Esophagus muscularis mucosa (tissue), 4 donors: ENCODE measurements at regions of chr19 and their contacts with region 1.

Region 1: GRCh38 chr19:2820112-2820702 is 539 bp downstream of the ZNF554 start:
- DNase-seq: no peak
- H3K4me3 ChIP-seq: peak overlapping the region; percentile 85 to 97 (median 92)
- H3K27ac ChIP-seq: peak overlapping the region; percentile 71 to 78 (median 72)
- H3K4me1 ChIP-seq: peaks cover 3 to 20% (median 18%) of the 10 kb centered on the region in 4 donors
- H3K27me3 ChIP-seq: no peaks in the 10 kb centered on the region
- CTCF ChIP-seq: no peak
- EP300 ChIP-seq: no peak
- POLR2A ChIP-seq: no peak

Region 2: DNA sequence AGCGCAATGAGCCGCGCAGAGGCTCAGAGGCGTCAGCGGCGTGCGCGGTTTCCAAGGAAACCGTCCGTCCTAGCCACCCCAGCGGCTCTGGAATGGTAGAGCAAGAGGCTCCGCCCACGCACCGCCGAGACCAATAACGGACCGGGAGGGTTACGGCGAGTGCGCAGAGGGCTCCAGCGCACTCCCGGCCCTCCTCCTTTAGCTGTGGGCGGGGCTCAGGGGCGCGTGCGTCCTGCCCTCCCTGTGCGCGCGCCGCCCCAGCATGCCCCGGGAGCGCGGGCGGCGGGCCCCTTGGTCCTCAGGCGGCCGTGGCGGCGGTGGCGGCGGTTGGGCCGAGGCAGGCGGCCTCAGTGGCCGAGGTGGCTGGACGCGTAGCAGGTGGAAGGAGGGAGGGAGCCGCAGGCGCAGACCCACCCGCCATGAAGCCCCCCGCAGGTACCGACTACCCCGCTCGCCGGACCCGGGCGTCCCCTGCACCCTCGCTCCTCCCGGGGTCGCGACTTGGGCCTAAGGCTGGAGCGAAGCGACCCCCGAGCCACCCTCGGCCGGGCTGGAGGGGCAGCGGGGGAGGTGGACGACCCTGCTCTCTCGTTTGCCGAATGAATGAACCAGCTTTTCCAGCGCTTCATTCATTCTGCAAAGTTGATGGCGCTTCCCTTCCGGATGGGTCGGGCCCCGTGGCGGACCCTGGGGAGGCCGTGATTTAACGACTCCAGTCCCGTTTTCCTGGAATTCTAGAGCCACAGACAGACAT is 34.8 kb before region 1 on chr19 and contains the start of gene THOP1:
- intact Hi-C with region 1: loop called (anchors 1 kb)
- DNase-seq: peak; percentile 98
- H3K4me3 ChIP-seq: peak within 1 kb of the TSS; percentile 73 to 96 (median 82)
- H3K27ac ChIP-seq: peak within 1 kb of the TSS; percentile 78 to 97 (median 84)
- H3K4me1 ChIP-seq: peaks cover 49 to 62% (median 50%) of the 10 kb centered on the region in 4 donors
- H3K27me3 ChIP-seq: no peaks in the 10 kb centered on the region
- CTCF ChIP-seq: peak in 1 of 3 experiments; percentile 38
- EP300 ChIP-seq: no peak
- POLR2A ChIP-seq: peak; percentile 37
- total RNA-seq, gene THOP1: 22.8 to 65.3 (median 42.4) TPM

Region 3: GRCh38 chr19:2900296-2901252 is 80.4 kb after region 1 on chr19 and contains the start of gene ZNF57:
- intact Hi-C with region 1: no loop called
- DNase-seq: peak; percentile 100
- H3K4me3 ChIP-seq: peak within 1 kb of the TSS; percentile 74 to 89 (median 77)
- H3K27ac ChIP-seq: peak within 1 kb of the TSS; percentile 79 to 91 (median 88)
- H3K4me1 ChIP-seq: peaks cover 7 to 19% (median 17%) of the 10 kb centered on the region in 4 donors
- H3K27me3 ChIP-seq: no peaks in the 10 kb centered on the region
- CTCF ChIP-seq: peak in 1 of 3 experiments; percentile 19
- EP300 ChIP-seq: no peak
- POLR2A ChIP-seq: peak; percentile 21
- total RNA-seq, gene ZNF57: 2.2 to 3.6 (median 2.3) TPM